GM12878 (cell line): ENCODE measurements at regions of chr7 and their contacts with region 1.

Region 1: DNA sequence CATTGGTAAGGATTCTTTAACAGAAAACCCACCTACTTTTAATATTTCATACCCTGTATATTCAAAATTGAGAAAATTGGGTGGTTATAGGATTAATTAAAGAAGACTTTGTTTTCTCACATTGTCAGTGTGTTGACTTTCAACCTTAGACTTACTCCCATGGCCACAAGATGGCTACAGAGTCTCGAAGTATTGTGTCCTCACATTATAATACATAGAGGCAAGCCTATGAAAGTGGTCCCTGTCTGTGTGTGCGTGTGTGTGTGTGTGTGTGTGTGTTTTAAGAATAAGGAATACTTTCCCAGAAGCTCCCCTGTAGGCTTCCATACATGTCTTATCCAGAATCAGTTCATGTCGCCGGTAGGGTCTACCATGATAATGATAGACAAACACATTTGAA is 180.0 kb downstream of the PHF14 start:
- DNase-seq: no peak
- ATAC-seq: no peak
- H3K4me3 ChIP-seq: no peak overlapping the region
- H3K27ac ChIP-seq: no peak overlapping the region
- H3K4me1 ChIP-seq: no peaks in the 10 kb centered on the region
- H3K27me3 ChIP-seq: no peaks in the 10 kb centered on the region
- CTCF ChIP-seq: no peak
- EP300 ChIP-seq: no peak
- POLR2A ChIP-seq: no peak
- RAD21 ChIP-seq: no peak

Region 2: DNA sequence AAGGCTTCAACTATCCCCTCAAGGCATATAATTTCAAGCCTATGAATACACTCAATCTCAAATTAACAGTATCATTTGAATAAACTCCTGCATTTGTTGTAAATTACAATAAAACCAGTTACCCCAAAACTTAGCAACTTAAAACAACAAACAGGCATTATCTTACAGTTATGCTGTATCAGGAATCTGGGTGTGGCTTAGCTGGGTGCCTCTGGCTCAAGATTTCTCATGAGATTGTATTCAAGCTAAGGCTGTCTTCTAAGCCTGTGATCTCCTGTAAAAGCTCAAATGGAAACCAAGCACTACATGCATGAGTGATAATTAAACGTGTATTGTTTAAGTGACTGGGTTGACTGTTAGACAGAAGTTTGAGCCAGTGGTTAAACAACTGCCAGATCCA is 521.0 kb before region 1 on chr7:
- CTCF ChIA-PET with region 1: no interaction called
- POLR2A ChIA-PET with region 1: no interaction called
- RAD21 ChIA-PET with region 1: no interaction called
- SMC1A ChIA-PET with region 1: no interaction called
- in situ Hi-C with region 1: no loop called
- intact Hi-C with region 1: no loop called
- DNase-seq: no peak
- ATAC-seq: no peak
- H3K4me3 ChIP-seq: no peak overlapping the region
- H3K27ac ChIP-seq: no peak overlapping the region
- H3K4me1 ChIP-seq: no peaks in the 10 kb centered on the region
- H3K27me3 ChIP-seq: no peaks in the 10 kb centered on the region
- CTCF ChIP-seq: no peak
- EP300 ChIP-seq: no peak
- POLR2A ChIP-seq: no peak
- RAD21 ChIP-seq: no peak

Region 3: GRCh38 chr7:11127114-11127835 is 26.4 kb before region 1 on chr7:
- CTCF ChIA-PET with region 1: interaction called, 10 read pairs
- POLR2A ChIA-PET with region 1: no interaction called
- RAD21 ChIA-PET with region 1: no interaction called
- SMC1A ChIA-PET with region 1: interaction called, 5 read pairs
- in situ Hi-C with region 1: no loop called
- intact Hi-C with region 1: no loop called
- DNase-seq: no peak
- ATAC-seq: peak; percentile 32; the same call in 1 of the 3 replicates
- H3K4me3 ChIP-seq: no peak overlapping the region
- H3K27ac ChIP-seq: no peak overlapping the region
- H3K4me1 ChIP-seq: no peaks in the 10 kb centered on the region
- H3K27me3 ChIP-seq: no peaks in the 10 kb centered on the region
- CTCF ChIP-seq: no peak
- EP300 ChIP-seq: no peak
- POLR2A ChIP-seq: no peak
- RAD21 ChIP-seq: no peak